Right ventricle myocardium inferior (tissue), 1 donor: ENCODE measurements at regions of chr10 and their contacts with region 1.

Region 1: DNA sequence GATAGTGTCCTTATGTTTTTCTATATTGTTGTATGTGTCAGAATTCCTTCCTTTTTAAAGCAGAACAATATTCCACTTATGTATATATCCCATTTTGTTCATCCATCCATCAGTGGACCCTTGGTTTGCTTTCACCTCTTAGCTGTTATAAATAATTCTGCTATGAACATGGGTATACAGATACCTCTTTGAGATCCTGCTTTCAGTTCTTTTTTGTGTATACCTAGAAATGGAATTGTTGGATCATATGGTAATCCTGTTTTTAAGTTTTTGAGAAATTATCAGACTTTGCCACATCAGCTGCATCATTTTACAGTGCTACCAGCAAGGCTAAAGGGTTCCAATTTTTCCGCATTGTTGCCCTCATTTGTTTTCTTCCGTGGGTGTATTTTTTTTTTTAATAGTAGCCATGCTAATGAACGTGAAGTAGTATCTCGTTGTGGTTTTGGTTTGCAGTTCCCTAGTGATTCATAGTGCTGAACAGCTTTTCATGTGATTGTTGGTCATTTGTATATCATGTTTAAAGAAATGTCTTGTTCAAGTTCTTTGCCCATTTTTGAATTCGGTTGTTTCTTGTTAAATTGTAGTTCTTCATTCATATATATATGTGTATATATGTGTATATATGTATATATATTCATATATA is 87.8 kb downstream of the LCOR start:
- DNase-seq: no peak
- ATAC-seq: no peak

Region 2: DNA sequence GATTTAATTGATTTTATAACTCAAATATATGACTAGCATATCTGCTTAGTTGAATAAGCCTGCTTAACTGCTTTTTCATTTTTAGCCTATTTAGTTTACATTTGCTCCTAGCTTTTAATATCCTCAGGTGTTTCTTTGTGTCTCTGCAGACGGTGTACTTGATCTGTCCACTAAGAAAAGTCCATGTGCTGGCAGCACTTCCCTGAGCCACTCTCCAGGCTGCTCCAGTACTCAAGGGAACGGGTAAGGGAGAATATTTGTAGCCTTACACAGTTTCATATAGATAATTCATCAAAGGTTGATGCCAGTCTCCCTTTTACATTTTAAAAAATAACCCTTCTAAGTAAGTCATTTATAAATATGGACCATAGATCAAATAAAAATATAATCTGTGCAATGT is 32.0 kb after region 1 on chr10:
- intact Hi-C with region 1: loop called (anchors 5 kb)
- DNase-seq: no peak
- ATAC-seq: no peak